PC-9 (cell line): ENCODE measurements at regions of chr3 and their contacts with region 1.

Region 1: DNA sequence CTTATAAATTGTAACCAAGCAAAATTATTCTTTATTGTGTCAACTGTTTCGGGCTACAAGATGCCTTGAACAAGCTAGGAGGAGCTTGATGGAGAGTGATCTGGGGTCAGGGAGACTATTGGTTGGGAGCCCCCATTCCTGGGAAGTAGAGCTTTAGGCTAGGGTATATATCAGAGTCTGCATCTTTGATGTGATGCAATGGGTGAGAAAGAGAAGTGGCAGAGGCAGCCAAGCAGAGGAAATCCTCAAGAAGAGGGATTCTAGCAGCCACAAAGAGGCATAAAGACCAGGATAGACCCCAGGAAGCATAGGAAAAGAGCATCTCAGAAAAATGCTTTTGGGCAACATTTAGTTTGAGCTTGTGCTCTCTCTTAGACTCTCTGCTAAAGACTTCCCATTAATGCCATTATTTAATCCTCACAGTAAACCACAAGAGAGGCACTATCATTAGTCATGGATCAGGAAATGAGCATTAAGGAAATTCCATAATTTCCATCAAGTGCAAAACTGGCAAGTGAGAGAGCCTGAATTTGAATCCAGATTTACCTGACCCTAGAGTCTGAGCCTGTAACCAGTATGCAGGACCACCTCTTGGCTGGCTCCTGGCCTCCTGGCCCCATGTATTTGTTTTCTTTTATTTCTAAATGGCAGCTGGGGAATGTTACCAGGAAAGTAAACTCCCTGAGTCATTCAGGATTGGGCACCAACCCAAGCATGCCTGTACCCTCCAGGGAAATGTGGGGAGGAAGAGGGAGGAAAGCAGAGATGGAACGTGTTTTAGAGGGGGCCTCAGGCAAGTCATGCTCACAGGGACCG is 118.7 kb downstream of the RPL22L1 start:
- DNase-seq: peak; percentile 85 to 94
- H3K4me3 ChIP-seq: no peak overlapping the region
- H3K27ac ChIP-seq: peak overlapping the region; percentile 83
- H3K4me1 ChIP-seq: peaks cover 44% of the 10 kb centered on the region
- H3K27me3 ChIP-seq: no peaks in the 10 kb centered on the region
- CTCF ChIP-seq: no peak

Region 2: DNA sequence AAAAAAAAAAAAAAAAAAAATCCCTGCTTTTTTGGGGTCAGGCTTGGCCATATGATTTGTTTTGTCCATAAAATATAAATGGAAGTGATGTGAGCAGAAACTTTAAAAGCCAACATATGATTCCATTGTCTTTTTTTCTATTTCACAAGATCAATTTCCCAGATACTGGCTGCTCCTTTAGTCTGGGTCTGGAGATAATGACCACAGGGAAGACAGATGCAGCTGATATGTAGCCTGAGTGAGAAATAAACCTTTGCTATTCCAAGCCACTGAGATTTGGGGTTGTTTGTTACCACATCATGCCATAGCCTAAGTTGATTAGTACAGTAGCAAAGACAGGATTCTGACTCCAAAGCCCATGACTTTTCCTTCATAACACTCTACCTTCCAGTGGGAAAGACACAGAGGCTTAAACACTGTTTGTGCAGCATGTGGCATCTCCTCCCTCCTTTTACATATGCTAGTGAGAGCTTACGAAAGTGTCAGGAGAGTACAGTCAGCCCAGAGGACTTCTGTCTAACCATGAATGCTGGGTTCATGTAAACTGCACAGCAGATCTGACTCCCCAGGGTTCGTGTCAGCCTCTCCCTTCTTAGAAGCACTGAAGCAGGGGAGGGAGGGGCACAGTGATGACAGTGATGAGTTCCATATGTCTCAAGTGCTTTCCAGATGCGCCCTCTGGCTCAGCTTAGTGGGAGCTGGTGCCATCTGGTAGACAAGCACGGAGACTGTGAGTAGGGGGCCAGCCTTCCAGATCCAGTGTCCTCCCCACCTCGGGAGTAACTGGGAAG is 128.7 kb before region 1 on chr3:
- CTCF ChIA-PET with region 1: interaction called, 12 read pairs
- POLR2A ChIA-PET with region 1: no interaction called
- intact Hi-C with region 1: no loop called
- DNase-seq: no peak
- H3K4me3 ChIP-seq: no peak overlapping the region
- H3K27ac ChIP-seq: no peak overlapping the region
- H3K4me1 ChIP-seq: no peaks in the 10 kb centered on the region
- H3K27me3 ChIP-seq: no peaks in the 10 kb centered on the region
- CTCF ChIP-seq: no peak

Region 3: DNA sequence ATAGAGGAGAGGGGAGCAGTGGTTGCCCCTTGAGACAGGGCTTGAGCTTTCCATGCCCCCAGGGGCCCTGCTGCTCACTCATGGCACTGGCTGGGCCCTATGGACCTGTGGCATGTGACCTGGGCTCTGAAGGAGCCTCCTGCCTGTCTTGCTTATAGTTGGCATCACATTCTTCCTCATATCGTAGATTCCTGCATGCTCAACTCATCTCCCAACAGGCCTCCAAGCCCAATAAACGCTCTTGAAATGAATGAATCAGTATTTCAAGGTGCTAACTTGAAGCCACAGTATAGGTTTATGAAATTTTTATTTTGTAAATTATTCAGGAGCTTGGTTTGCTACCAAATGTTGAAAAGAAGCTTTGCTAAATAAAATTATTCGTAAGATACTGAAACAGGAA is 72.1 kb before region 1 on chr3:
- CTCF ChIA-PET with region 1: no interaction called
- POLR2A ChIA-PET with region 1: interaction called, 17 read pairs
- intact Hi-C with region 1: no loop called
- DNase-seq: peak; percentile 10 to 53
- H3K4me3 ChIP-seq: no peak overlapping the region
- H3K27ac ChIP-seq: no peak overlapping the region
- H3K4me1 ChIP-seq: no peaks in the 10 kb centered on the region
- H3K27me3 ChIP-seq: no peaks in the 10 kb centered on the region
- CTCF ChIP-seq: no peak

Region 4: DNA sequence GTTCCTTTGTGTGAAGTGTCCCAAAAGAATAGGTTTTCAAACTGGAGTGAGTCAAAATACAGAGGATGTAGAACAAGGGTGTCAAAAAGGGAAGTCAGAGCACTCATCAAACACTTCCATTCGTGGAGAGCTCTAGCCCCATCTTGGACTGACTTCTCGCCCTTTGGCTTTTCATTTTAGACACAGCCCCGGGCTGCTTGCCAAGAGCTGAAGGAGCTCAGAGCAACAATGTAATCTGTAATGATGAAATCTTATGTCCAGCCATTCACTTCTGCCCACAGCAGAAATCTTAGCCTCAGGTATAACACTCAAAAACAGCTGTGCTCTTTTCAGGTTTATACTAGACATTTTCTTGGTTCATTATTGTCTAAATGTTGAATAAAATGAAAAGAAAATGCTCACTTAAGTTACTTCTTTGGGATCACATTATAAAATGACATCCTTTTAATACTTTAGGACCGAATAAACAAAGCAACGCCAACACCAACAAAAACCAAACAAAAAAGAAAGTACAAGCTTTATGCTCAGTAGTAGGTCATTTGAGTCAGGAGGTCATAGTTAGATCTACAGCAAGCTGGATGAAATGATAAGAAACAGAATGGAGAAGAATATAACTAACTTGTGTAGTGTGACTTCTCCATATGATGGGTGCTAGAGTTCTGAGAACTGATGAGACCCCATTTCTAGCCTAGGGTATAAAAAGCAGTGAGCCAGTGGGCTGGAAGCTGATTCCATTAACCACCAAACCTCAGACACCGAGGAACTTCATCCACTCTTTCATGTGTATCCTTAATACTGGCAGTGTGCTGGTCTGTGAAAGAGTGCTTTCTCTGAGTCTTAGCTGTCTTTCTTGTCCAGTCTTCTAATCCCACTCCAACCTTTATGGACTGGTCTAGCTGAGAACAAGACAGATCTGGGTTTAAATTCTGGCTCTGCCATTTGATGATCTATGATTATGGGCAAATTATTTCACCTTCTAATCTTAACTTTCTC is 33.6 kb before region 1 on chr3:
- CTCF ChIA-PET with region 1: no interaction called
- POLR2A ChIA-PET with region 1: no interaction called
- intact Hi-C with region 1: loop called (anchors 1 kb)
- DNase-seq: peak; percentile 60 to 63
- H3K4me3 ChIP-seq: no peak overlapping the region
- H3K27ac ChIP-seq: no peak overlapping the region
- H3K4me1 ChIP-seq: peaks cover 26% of the 10 kb centered on the region
- H3K27me3 ChIP-seq: no peaks in the 10 kb centered on the region
- CTCF ChIP-seq: no peak